ENCODE measurements at regions of chr14 and their contacts with region 1.

Region 1: GRCh38 chr14:73728717-73729330 is 14.6 kb upstream of the PNMA1 start:
- DNase-seq: peak; percentile 86
- H3K4me3 ChIP-seq: no peak overlapping the region
- H3K27ac ChIP-seq: peak overlapping the region; percentile 69
- H3K4me1 ChIP-seq: peaks cover 84% of the 10 kb centered on the region
- H3K27me3 ChIP-seq: no peaks in the 10 kb centered on the region
- CTCF ChIP-seq: peak; percentile 97

Region 2: GRCh38 chr14:73825551-73826188 is 96.8 kb after region 1 on chr14:
- intact Hi-C with region 1: loop called (anchors 2 kb)
- DNase-seq: peak; percentile 91
- H3K4me3 ChIP-seq: no peak overlapping the region
- H3K27ac ChIP-seq: peak overlapping the region; percentile 16
- H3K4me1 ChIP-seq: peaks cover 13% of the 10 kb centered on the region
- H3K27me3 ChIP-seq: no peaks in the 10 kb centered on the region
- CTCF ChIP-seq: peak; percentile 96

Region 3: DNA sequence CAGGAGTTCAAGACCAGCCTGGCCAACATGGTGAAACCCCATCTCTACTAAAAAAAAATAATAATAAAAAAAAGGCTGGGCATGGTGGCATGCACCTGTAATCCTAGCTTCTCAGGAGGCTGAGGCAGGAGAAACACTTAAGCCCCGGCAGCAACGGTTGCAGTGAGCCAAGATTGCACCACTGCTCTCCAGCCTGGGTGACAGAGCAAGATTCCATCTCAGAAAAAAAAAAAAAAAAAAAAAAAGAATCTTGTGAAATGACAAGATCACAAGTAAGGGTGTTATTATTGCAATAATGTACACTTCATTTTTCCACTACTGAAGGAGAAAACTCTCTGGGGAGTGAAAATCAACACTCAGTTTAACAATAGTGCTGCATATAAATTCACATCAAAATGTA is 114.0 kb after region 1 on chr14:
- intact Hi-C with region 1: no loop called
- DNase-seq: no peak
- H3K4me3 ChIP-seq: no peak overlapping the region
- H3K27ac ChIP-seq: no peak overlapping the region
- H3K4me1 ChIP-seq: no peaks in the 10 kb centered on the region
- H3K27me3 ChIP-seq: no peaks in the 10 kb centered on the region
- CTCF ChIP-seq: no peak